ENCODE measurements at regions of chr7 and their contacts with region 1.

Region 1: GRCh38 chr7:7182156-7183060 is at the start of gene C1GALT1:
- DNase-seq: peak; percentile 96
- ATAC-seq: peak; percentile 82
- H3K4me3 ChIP-seq: peak within 1 kb of the TSS; percentile 87
- H3K27ac ChIP-seq: peak within 1 kb of the TSS; percentile 63
- H3K4me1 ChIP-seq: peaks cover 35% of the 10 kb centered on the region
- H3K27me3 ChIP-seq: no peaks in the 10 kb centered on the region
- CTCF ChIP-seq: peak; percentile 39
- total RNA-seq, gene C1GALT1: 19.3 and 32.3 TPM in 2 replicates

Region 2: DNA sequence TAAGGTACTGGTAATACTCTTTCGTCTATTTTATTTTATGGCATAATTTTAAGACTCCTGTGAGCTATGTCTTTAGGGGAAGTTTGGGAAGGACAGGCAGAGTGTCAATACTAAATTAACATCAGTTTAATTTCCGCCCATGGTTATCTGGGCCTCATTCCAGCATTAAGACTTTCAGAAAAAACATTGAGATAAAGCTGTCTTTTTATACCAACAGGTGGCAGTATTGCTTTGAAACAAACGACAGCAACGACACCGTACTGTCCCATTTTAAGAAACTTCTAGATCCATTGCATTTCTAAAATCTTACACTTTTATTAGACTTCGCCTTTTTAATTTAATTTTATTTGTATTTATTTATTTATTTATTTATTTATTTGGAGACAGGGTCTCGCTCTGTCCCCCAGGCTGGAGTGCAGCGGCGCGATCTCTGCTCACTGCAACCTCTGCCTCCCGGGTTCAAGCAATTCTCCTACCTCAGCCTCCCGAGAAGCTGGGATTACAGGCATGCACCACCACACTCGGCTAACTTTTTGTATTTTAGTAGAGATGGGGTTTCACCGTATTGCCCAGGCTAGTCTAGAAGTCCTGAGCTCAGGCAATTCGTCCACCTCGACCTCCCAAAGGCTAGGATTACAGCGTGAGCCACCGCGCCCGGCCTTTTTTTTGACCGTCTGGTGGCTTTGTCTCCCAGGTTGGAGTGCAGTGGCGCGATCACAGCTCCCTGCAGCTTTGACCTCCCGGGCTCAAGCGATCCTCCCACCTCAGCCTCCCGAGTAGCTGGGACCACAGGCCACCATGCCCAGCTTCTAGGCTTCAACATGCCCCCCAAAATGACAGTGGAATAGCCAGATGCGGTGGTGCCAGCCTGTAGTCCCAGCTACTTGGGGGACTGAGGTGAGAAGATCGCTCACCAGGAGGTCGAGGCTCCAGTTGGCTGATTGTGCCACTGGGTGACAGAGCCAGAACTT is 78.8 kb before region 1 on chr7:
- CTCF ChIA-PET with region 1: interaction called, 23 read pairs
- POLR2A ChIA-PET with region 1: no interaction called
- intact Hi-C with region 1: loop called (anchors 1 kb)
- DNase-seq: peak; percentile 81
- ATAC-seq: peak; percentile 58
- H3K4me3 ChIP-seq: peak overlapping the region; percentile 49
- H3K27ac ChIP-seq: no peak overlapping the region
- H3K4me1 ChIP-seq: peaks cover 17% of the 10 kb centered on the region
- H3K27me3 ChIP-seq: no peaks in the 10 kb centered on the region
- CTCF ChIP-seq: peak; percentile 68

Region 3: DNA sequence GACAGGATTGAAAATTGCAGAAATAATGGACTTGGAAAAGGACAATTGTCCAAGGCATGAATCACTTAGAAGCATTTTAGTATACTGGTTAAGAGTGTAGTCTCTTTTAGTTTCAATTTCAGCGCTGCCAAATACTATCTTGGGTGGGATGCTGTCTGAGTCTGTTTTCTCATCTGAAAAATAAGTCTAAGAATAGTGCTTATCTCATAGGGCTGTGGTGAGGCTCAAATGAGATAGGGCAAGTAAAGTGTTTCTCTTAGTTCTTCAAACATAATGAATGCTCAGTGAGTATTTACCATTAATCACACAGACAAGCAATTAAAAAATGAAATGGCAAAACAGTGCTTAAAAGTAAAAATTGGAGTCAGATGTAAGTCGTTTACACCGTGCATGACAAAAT is 46.0 kb before region 1 on chr7:
- CTCF ChIA-PET with region 1: no interaction called
- POLR2A ChIA-PET with region 1: no interaction called
- intact Hi-C with region 1: no loop called
- DNase-seq: no peak
- ATAC-seq: no peak
- H3K4me3 ChIP-seq: no peak overlapping the region
- H3K27ac ChIP-seq: no peak overlapping the region
- H3K4me1 ChIP-seq: no peaks in the 10 kb centered on the region
- H3K27me3 ChIP-seq: no peaks in the 10 kb centered on the region
- CTCF ChIP-seq: no peak

Region 4: DNA sequence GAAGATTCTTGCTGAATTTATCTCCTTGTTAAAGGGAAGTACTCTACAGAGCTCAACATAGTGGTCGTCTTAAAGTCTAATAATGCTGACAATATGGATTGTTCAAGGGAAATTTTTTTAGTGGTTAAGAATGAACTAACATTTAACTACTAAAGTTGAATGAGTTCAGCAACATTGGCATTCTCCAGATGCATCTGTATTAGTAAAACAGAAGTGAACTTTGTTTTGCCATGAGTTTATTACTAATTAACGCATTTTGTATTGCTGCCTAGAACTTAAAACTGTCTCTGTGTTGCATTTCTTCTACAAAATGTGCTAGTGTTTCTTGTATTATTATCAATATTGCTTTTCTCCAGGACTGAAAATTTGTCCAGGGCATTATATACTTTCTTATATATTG is 67.4 kb after region 1 on chr7:
- CTCF ChIA-PET with region 1: no interaction called
- POLR2A ChIA-PET with region 1: no interaction called
- intact Hi-C with region 1: loop called (anchors 5 kb)
- DNase-seq: no peak
- ATAC-seq: no peak
- H3K4me3 ChIP-seq: no peak overlapping the region
- H3K27ac ChIP-seq: no peak overlapping the region
- H3K4me1 ChIP-seq: peaks cover 7% of the 10 kb centered on the region
- H3K27me3 ChIP-seq: no peaks in the 10 kb centered on the region
- CTCF ChIP-seq: no peak

Region 5: DNA sequence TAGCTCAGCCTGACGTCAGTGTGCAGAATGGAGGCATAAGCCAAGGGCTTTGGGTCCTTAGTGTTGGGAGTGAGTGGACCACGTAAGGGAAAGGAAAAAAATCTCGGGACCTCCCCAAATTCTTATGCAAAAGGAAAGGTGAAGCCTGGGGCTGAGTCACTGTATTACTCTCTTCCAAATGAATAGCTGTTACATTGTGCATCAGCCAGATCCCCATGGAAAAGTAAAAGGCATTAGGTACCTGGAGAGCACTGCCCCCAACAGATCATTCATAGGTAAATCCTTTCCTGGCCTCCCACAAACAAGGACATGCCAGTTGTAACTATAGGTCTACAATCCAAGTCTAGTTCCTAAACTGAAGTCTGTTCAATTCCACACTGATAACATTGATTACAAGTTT is 170.4 kb after region 1 on chr7:
- CTCF ChIA-PET with region 1: no interaction called
- POLR2A ChIA-PET with region 1: no interaction called
- intact Hi-C with region 1: loop called (anchors 5 kb)
- DNase-seq: peak; percentile 68
- ATAC-seq: peak; percentile 74
- H3K4me3 ChIP-seq: no peak overlapping the region
- H3K27ac ChIP-seq: no peak overlapping the region
- H3K4me1 ChIP-seq: peaks cover 16% of the 10 kb centered on the region; the same call in 1 of the 2 replicates
- H3K27me3 ChIP-seq: no peaks in the 10 kb centered on the region
- CTCF ChIP-seq: peak; percentile 54

Region 6: DNA sequence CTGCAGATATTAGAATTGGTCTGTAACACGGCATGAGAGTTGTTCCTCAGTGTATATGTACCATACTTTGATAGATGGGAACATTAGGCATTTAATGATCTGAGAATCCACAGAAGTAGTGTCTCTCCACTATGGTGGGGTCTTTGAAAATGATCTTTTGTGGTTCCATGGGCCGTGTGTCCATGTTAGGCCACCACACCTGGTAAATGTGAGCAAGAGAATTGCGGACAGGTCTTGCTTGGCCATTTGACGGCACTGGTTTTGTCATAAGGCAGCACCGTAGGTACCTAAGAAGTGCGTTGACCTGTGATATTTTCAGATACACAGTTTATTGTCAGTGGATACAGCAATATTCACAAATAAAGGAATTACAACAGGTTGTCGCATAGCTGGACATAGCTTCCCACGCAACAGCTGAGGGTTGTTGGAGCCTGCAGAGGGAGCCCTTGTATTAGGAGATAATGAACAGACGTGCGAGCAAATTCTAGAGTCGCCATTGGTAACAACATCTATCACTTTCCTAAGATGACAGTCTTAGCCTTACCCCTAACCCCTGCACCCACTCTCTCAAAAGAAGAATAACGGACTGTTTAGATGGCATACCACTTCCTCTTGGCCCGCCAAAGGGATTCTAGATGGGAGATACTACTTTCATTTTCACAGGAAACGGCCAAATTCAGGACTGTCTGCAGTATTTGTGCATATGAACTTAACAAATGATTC is 241.9 kb after region 1 on chr7:
- CTCF ChIA-PET with region 1: interaction called, 4 read pairs
- POLR2A ChIA-PET with region 1: no interaction called
- intact Hi-C with region 1: loop called (anchors 1 kb)
- DNase-seq: peak; percentile 81
- ATAC-seq: peak; percentile 95
- H3K4me3 ChIP-seq: peak overlapping the region; percentile 65
- H3K27ac ChIP-seq: no peak overlapping the region
- H3K4me1 ChIP-seq: peaks cover 8% of the 10 kb centered on the region; the same call in 1 of the 2 replicates
- H3K27me3 ChIP-seq: no peaks in the 10 kb centered on the region
- CTCF ChIP-seq: peak; percentile 94

Region 7: DNA sequence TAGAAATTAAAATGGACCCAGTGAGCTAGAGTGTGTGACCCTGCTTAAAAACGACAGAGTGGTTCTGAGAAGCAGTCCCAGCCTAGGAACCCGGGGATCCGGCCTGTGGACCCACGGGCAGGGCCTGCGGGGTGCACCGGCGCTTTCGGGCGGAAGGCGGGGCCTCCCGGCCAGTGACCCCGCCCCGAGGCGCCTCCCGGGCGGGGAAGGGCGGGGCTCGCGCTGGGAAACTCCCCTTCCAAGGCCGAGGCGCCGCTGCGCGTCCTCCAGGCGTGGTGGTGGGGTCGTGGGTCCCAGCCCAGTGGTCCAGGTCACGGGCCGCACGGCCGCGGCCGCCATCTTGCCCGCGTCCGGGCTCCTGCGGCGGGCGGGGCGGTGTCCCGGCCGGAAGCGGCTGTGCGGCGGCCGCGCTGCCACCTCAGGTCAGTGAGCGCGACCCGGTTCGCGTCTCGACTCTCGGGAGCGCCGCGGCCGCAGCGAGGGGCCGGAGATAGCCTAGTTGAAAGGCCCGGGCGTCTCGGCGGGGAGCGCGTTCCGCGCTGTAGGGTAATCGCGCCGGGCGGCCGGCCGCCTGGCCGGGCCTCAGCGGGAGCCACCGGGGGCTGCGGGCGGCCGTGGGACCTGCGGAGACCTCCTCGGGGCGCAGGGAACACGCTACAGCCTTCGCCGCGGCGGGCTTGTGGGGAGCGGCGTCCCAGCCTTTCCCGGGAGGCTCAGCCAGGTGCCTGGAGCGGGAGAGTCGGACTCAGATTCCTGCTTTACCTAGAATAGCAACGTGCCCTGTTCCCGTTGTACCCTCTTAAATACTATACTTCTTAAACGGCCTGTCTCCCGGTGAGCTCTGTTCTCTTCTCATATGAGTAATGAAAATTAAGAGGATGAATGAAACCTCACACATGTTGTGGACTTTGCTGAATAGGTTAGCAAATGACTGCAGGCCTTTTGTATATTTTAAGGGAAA is 384.5 kb after region 1 on chr7 and contains the start of gene MIOS:
- CTCF ChIA-PET with region 1: no interaction called
- POLR2A ChIA-PET with region 1: no interaction called
- intact Hi-C with region 1: loop called (anchors 1 kb)
- DNase-seq: peak; percentile 81
- ATAC-seq: peak; percentile 74
- H3K4me3 ChIP-seq: peak within 1 kb of the TSS; percentile 86
- H3K27ac ChIP-seq: peak within 1 kb of the TSS; percentile 95
- H3K4me1 ChIP-seq: peaks cover 57% of the 10 kb centered on the region
- H3K27me3 ChIP-seq: no peaks in the 10 kb centered on the region
- CTCF ChIP-seq: no peak
- total RNA-seq, gene MIOS: 18.6 and 26.6 TPM in 2 replicates

Measured in PC-3 (cell line).